Activated naive CD4-positive, alpha-beta T cell treated with anti-CD3 and anti-CD28 coated beads for 36 hours (primary cell): ENCODE measurements at regions of chr1 and their contacts with region 1.

Region 1: GRCh38 chr1:200866521-200866920 is 6.3 kb upstream of the GPR25 start:
- DNase-seq: peak; percentile 71
- H3K4me3 Mint-ChIP-seq: no peak overlapping the region
- H3K27ac Mint-ChIP-seq: no peak overlapping the region
- H3K4me1 Mint-ChIP-seq: peaks cover 40% of the 10 kb centered on the region
- H3K27me3 Mint-ChIP-seq: peaks cover 12% of the 10 kb centered on the region

Region 2: DNA sequence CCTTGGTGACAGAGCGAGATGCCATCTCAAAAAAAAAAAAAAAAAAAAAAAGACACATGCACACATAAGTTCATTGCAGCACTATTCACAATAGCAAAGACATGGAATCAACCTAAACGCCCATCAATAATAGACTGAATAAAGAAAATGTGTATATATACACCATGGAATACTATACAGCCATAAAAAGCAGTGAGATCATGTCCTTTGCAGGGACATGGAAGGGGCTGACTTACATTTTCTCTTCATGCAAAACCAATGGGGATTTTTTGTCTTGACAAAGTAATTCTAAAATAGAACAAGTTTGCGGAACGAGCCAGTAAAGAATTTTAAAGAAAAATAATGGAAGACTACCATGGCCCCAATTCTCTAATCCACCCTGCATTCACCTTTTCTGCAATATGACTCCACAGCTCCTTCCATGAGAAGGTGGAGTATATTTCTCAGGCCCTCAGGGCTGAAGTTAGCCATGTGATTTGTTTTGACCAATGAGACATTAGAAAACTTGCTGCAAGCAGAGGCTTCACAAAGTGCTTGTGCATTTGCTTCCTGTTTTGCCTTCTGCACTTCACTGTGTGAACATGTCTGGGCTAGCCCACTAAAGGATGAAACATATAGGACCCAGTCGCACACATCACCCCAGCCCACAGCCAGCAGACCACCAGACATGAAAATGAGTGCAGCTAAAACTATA is 917.8 kb before region 1 on chr1:
- CTCF ChIA-PET with region 1: no interaction called
- intact Hi-C with region 1: loop called (anchors 10 kb)
- DNase-seq: no peak
- H3K4me3 Mint-ChIP-seq: no peak overlapping the region
- H3K27ac Mint-ChIP-seq: no peak overlapping the region
- H3K4me1 Mint-ChIP-seq: no peaks in the 10 kb centered on the region
- H3K27me3 Mint-ChIP-seq: peaks cover 41% of the 10 kb centered on the region

Region 3: DNA sequence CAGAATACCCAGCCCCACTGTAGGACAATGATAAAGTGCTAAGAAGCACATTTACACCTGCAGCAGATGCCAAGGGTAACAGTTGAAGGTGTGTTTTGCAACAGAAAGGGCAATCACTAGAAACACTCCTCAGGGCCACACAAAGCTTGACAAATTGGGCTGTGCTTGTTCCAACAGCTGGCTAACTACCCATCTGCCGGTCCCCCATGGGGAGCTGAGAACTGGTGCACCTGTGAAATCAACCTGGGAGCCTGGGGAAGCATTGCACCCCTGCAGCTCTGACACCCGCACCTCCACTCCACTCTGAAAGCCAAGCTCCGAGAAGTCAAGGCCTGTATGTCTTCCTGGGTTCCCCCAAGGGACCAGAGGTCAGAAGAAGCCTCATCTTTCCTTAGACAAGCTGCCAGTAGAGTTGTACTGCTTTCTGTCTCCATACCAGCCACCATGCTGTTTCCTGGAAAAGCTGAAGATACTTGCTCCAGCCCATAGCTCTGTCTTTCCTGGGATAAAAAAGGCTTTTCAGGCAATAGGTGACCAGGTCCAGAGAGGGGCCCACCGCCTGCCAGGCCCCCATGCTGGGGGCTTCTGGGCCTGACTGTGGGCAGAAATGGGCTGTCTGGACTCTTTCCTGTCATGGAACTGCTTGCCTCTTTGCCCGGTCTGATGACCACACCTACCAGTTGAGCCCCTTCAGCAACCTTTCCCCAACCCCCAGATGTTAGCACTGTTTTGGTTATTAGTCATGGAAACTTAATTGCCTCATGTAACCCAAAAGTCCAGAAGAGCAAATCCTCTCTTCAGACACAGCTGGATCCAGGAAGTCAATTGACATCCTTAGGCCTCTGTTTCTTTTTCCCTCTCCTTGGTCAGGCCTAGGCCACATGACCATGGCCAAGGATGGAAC is 339.6 kb before region 1 on chr1:
- CTCF ChIA-PET with region 1: no interaction called
- intact Hi-C with region 1: no loop called
- DNase-seq: no peak
- H3K4me3 Mint-ChIP-seq: no peak overlapping the region
- H3K27ac Mint-ChIP-seq: no peak overlapping the region
- H3K4me1 Mint-ChIP-seq: peaks cover 35% of the 10 kb centered on the region
- H3K27me3 Mint-ChIP-seq: no peaks in the 10 kb centered on the region

Region 4: DNA sequence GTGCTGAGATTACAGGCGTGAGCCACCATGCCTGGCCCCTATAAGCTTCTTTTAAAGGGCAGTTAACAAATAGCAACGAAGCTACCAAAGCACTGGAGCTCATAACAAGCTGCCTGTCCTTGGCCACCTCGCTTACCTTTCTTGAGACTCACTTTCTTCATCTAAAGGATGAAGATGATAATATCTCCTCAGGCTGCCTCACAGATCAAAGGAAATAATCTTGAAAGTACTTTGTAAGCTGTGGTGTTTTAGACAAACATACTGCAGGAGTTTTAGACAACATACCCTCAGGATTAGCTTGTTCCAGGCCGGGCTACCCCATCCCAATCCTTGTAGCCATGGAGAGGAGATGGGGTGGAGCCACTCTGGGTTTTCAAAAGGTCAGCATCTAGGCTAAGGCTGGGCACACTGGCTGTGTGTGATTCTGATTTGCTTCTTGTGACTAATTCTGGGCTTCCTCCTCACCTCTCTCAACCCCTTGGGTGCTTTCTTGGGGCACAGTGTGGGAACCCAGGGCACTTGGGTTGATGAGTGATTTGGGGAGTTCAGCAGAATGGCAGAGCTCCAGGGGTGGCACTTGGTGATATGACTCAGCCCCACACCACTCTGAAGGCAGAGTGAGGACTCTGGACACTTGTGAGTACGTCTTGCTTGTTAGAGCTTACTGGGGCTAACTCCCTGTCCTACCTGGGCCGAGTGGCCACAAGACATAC is 11.5 kb after region 1 on chr1:
- CTCF ChIA-PET with region 1: interaction called, 7 read pairs
- intact Hi-C with region 1: loop called (anchors 1 kb)
- DNase-seq: peak; percentile 76
- H3K4me3 Mint-ChIP-seq: no peak overlapping the region
- H3K27ac Mint-ChIP-seq: no peak overlapping the region
- H3K4me1 Mint-ChIP-seq: peaks cover 22% of the 10 kb centered on the region
- H3K27me3 Mint-ChIP-seq: peaks cover 24% of the 10 kb centered on the region

Region 5: GRCh38 chr1:200907611-200908097 is 41.1 kb after region 1 on chr1:
- CTCF ChIA-PET with region 1: no interaction called
- intact Hi-C with region 1: loop called (anchors 2 kb)
- DNase-seq: no peak
- H3K4me3 Mint-ChIP-seq: no peak overlapping the region
- H3K27ac Mint-ChIP-seq: no peak overlapping the region
- H3K4me1 Mint-ChIP-seq: peaks cover 12% of the 10 kb centered on the region
- H3K27me3 Mint-ChIP-seq: peaks cover 2% of the 10 kb centered on the region